ENCODE measurements at regions of chr7 and their contacts with region 1.

Region 1: GRCh38 chr7:90629297-90629918 is 33.3 kb downstream of the CDK14 start:
- H3K4me3 Mint-ChIP-seq: no peak overlapping the region
- H3K27ac Mint-ChIP-seq: no peak overlapping the region
- H3K4me1 Mint-ChIP-seq: peaks cover 6% of the 10 kb centered on the region
- H3K27me3 Mint-ChIP-seq: no peaks in the 10 kb centered on the region

Region 2: DNA sequence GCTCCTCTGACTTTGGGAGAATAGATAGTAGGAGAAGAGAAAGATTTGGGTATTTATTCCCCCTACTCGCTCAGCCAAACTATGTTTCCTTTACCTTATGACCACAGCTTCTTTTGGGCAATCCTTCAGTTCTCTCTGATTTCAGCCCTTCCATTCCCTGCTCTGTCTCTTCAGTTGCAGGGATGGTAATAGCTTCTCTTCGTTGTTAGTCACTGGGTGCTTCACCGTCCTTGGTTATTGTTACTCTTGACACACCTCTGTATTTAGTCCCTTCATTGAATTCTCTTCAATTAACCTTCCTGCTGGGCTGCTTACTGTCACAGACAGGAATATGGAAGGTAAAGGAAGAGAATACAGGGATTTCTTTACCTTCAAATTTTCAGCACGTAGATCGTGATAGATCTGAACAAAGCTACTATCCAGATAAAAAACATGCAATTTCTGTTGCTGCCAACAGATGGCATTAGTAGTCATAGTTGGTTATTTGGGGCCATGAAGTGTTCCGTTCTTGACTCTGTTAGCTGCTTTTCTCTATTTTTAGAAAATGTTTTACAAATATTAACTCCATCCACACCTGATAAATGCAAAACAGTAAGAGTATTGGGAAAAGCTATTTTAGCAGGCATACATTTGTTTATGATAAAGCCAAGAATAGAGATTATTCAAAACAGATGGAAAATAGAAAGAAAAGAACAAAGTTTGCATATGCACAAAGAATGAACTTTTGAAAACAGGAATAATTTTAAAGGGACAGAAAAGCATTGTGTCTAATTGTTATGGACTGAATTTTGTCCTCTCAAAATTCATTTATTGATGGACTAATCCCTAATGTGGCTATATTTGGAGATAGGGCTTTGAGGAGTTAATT is 174.0 kb before region 1 on chr7:
- intact Hi-C with region 1: loop called (anchors 1 kb)
- H3K4me3 Mint-ChIP-seq: no peak overlapping the region
- H3K27ac Mint-ChIP-seq: no peak overlapping the region
- H3K4me1 Mint-ChIP-seq: peaks cover 5% of the 10 kb centered on the region
- H3K27me3 Mint-ChIP-seq: peaks cover 1% of the 10 kb centered on the region

Region 3: GRCh38 chr7:90552521-90552920 is 76.9 kb before region 1 on chr7:
- intact Hi-C with region 1: loop called (anchors 2 kb)
- H3K4me3 Mint-ChIP-seq: no peak overlapping the region
- H3K27ac Mint-ChIP-seq: no peak overlapping the region
- H3K4me1 Mint-ChIP-seq: no peaks in the 10 kb centered on the region
- H3K27me3 Mint-ChIP-seq: peaks cover 16% of the 10 kb centered on the region

Measured in dendritic cell treated with granulocyte-macrophage colony-stimulating factor and Interleukin-4, amounts not matched to agents 40 ng/mL and 50 ng/mL, for 4 days (primary cell).